CD8-positive, alpha-beta T cell (primary cell): ENCODE measurements at regions of chr5 and their contacts with region 1.

Region 1: GRCh38 chr5:90434116-90434714 is 24.7 kb upstream of the CETN3 start:
- DNase-seq: peak in 7 of 9 experiments; percentile 16 to 60 (median 52)
- ATAC-seq: peak; percentile 69
- H3K4me3 ChIP-seq: no peak overlapping the region
- H3K4me3 Mint-ChIP-seq: no peak overlapping the region
- H3K27ac ChIP-seq: no peak overlapping the region
- H3K27ac Mint-ChIP-seq: no peak overlapping the region
- H3K4me1 ChIP-seq: no peaks in the 10 kb centered on the region
- H3K4me1 Mint-ChIP-seq: no peaks in the 10 kb centered on the region
- H3K27me3 ChIP-seq: no peaks in the 10 kb centered on the region
- H3K27me3 Mint-ChIP-seq: peaks cover 8% of the 10 kb centered on the region
- CTCF ChIP-seq: peak; percentile 68

Region 2: DNA sequence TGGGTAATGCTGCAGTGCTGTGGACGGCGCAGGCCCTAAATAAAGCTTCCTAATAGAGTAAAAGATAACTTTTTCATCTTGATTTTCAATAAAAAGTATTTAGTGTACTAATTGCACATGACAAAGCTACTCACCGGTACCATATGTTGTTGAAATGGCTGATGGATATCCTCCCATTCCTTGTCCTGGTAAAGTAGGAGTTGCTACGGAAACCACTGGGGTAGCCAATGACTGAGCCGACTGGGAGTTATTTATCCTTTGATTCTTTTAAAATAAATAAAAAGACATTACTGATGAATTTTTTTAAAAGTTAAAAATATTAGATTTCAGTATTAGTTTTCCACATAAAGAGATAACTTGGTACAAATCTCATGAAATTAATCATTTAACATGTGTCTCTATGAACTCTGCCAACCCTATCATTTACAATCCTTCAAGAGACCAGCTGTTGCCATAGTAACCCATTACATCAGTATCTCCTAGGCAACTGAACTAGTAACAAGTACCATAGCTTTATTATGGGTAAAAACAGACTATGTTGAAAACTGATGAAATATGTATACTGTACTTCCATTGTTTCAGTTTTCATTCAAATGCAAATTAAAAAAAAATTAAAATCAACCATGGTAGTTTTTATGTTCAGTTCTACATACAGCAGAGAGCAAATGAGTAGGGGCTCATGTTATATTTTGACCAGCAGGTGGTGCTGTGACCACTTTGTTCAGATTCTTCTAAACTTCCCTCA is 1705.0 kb before region 1 on chr5:
- CTCF ChIA-PET with region 1: interaction called, 21 read pairs
- POLR2A ChIA-PET with region 1: no interaction called
- intact Hi-C with region 1: loop called (anchors 1 kb)
- DNase-seq: peak in 8 of 9 experiments; percentile 30 to 76 (median 58)
- ATAC-seq: peak; percentile 68
- H3K4me3 ChIP-seq: no peak overlapping the region
- H3K4me3 Mint-ChIP-seq: no peak overlapping the region
- H3K27ac ChIP-seq: no peak overlapping the region
- H3K27ac Mint-ChIP-seq: no peak overlapping the region
- H3K4me1 ChIP-seq: no peaks in the 10 kb centered on the region
- H3K4me1 Mint-ChIP-seq: peaks cover 5% of the 10 kb centered on the region
- H3K27me3 ChIP-seq: no peaks in the 10 kb centered on the region
- H3K27me3 Mint-ChIP-seq: peaks cover 15% of the 10 kb centered on the region
- CTCF ChIP-seq: peak; percentile 86

Region 3: DNA sequence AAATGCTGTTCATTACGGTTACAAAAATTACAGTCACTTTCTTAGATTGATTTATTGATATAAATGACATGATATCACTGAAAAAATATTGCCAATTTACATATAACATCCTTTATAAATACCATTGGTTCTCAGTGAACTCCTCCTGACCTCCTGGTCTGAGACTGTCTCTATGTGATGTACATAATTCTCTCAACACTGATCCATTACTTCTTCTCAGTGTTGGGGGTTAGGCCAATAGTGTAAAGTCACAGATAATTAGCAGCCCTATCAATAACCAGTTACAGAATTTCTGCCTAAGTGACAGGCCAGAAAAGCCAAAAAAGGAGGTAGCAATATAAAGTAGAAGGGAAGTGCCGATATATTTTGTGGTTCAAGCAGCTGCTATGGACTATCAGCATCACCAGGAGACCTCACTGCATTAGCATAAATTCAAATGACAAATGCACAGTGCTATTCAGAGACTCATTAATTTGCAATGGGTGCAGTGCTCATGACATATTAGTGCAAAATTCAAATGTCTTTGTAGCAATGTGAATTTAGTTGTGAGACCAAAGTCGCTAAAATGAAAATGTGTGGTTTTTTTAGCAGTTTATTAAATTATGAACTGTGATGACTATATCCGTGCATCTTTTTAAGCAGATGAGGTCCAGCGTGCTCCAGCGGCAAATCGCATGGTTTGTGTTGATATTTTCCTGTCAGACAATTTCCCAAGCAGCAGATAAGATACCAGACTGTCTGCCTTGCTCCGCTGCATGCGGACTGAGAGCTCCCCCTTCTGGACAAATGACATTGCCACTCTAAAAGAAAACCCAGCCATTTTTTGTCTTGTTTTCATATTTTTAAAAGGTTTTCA is 169.3 kb before region 1 on chr5:
- CTCF ChIA-PET with region 1: no interaction called
- POLR2A ChIA-PET with region 1: no interaction called
- intact Hi-C with region 1: loop called (anchors 5 kb)
- DNase-seq: peak; percentile 2 to 59 (median 41)
- ATAC-seq: no peak
- H3K4me3 ChIP-seq: no peak overlapping the region
- H3K4me3 Mint-ChIP-seq: no peak overlapping the region
- H3K27ac ChIP-seq: no peak overlapping the region
- H3K27ac Mint-ChIP-seq: no peak overlapping the region
- H3K4me1 ChIP-seq: no peaks in the 10 kb centered on the region
- H3K4me1 Mint-ChIP-seq: peaks cover 2% of the 10 kb centered on the region
- H3K27me3 ChIP-seq: no peaks in the 10 kb centered on the region
- H3K27me3 Mint-ChIP-seq: peaks cover 11% of the 10 kb centered on the region
- CTCF ChIP-seq: peak; percentile 74

Region 4: DNA sequence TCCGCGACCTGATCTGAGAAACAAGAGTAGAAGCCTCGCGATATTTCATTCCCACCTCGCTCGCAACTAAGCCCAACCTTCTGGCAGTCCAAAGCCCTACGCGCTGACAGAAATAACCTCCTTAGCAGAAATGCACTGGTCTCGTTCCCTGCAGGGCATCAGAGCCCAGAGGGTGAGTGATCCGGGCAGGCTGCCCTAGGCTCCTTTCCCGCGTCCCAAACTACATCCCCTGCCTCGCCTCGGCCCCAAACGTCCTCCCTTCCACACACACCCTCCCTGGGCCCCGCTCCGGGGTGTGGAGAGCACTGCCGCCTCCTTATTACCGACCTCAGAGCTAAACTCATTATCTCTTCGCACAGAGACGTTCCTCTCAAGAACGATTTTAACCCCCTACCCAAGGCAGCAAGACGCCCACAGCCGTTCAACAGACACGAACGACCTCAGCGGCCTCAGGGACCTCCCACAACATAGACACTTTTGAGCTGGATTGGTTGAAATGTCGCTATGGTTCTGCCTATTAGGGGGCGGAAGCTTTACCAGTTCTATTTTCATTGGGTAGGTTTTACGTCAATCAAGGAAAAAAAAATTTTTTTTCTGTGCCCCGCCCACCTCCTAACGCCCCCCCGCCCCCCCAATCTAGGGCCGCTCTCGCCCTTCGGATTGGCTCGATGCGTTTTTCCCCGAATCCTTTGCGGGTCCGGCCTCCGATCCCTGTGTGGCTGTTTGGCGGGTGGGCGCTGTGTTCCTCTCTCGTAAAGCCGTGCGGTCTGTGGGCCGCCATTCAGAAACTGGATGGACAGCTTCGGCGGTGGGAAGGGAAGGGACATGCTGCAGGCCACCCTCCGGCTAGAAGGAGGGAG is 24.7 kb before region 1 on chr5 and contains the start of gene CETN3:
- CTCF ChIA-PET with region 1: interaction called, 3 read pairs
- POLR2A ChIA-PET with region 1: interaction called, 10 read pairs
- intact Hi-C with region 1: loop called in 1 of 2 experiments (anchors 2 kb)
- DNase-seq: peak; percentile 81 to 96 (median 89)
- ATAC-seq: peak; percentile 90
- H3K4me3 ChIP-seq: peak within 1 kb of the TSS; percentile 91 to 99
- H3K4me3 Mint-ChIP-seq: no peak within 1 kb of the TSS
- H3K27ac ChIP-seq: peak within 1 kb of the TSS; percentile 93 to 95
- H3K27ac Mint-ChIP-seq: no peak within 1 kb of the TSS
- H3K4me1 ChIP-seq: peaks cover 7% of the 10 kb centered on the region
- H3K4me1 Mint-ChIP-seq: peaks cover 24% of the 10 kb centered on the region
- H3K27me3 ChIP-seq: no peaks in the 10 kb centered on the region
- H3K27me3 Mint-ChIP-seq: no peaks in the 10 kb centered on the region
- CTCF ChIP-seq: no peak
- total RNA-seq, gene CETN3: 2.4 to 3.4 TPM

Region 5: DNA sequence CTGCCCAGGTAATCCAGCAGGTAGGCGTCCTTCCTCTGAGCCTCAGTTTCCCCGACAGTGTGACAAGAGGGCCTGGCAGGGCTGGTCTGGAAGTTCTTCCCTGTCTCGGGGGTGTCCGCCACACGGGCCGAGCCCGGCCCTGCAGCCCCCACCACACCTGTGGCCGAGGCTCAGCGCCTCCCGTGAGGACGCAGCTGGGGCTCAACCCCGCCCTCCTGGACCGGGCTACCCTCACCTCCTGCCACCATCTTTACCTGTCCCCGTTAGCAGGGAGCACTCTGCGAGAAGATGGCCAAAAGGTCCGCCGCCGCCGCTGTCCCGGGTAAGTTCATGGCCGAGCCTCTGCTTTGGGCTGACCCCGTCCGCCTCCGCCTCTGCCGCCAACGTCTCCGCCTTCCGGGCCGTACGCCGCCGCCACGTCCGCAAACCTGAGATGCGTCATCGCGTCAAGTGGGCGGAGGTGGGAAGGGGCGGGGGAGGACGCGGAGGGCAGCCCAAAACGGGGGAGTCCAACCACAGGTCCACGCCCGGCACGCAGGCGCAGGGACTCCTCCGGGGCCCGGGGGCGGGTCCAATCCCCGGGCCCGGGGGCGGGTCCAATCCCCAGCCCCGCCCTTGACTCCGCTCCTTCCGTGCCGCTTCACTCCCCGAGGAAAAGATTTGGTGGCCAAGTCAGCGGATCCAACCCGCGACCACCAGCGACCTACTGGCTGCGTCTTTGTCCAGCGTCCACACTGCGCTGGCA is 95.2 kb after region 1 on chr5 and contains the start of gene LYSMD3:
- CTCF ChIA-PET with region 1: interaction called, 59 read pairs
- POLR2A ChIA-PET with region 1: interaction called, 7 read pairs
- intact Hi-C with region 1: loop called in 1 of 2 experiments (anchors 1 kb)
- DNase-seq: peak; percentile 94 to 99 (median 98)
- ATAC-seq: peak; percentile 91
- H3K4me3 ChIP-seq: peak within 1 kb of the TSS; percentile 90 to 98
- H3K4me3 Mint-ChIP-seq: peak within 1 kb of the TSS; percentile 99
- H3K27ac ChIP-seq: peak within 1 kb of the TSS; percentile 95 to 98
- H3K27ac Mint-ChIP-seq: peak within 1 kb of the TSS; percentile 99
- H3K4me1 ChIP-seq: peaks cover 27% of the 10 kb centered on the region
- H3K4me1 Mint-ChIP-seq: peaks cover 37% of the 10 kb centered on the region
- H3K27me3 ChIP-seq: no peaks in the 10 kb centered on the region
- H3K27me3 Mint-ChIP-seq: peaks cover 11% of the 10 kb centered on the region
- CTCF ChIP-seq: no peak
- total RNA-seq, gene LYSMD3: 25.8 to 30.9 TPM

Region 6: GRCh38 chr5:90602681-90603080 is 168.5 kb after region 1 on chr5:
- CTCF ChIA-PET with region 1: interaction called, 3 read pairs
- POLR2A ChIA-PET with region 1: no interaction called
- intact Hi-C with region 1: loop called in 1 of 2 experiments (anchors 5 kb)
- DNase-seq: no peak
- ATAC-seq: no peak
- H3K4me3 ChIP-seq: no peak overlapping the region
- H3K4me3 Mint-ChIP-seq: no peak overlapping the region
- H3K27ac ChIP-seq: no peak overlapping the region
- H3K27ac Mint-ChIP-seq: no peak overlapping the region
- H3K4me1 ChIP-seq: no peaks in the 10 kb centered on the region
- H3K4me1 Mint-ChIP-seq: no peaks in the 10 kb centered on the region
- H3K27me3 ChIP-seq: no peaks in the 10 kb centered on the region
- H3K27me3 Mint-ChIP-seq: peaks cover 24% of the 10 kb centered on the region
- CTCF ChIP-seq: no peak

Region 7: DNA sequence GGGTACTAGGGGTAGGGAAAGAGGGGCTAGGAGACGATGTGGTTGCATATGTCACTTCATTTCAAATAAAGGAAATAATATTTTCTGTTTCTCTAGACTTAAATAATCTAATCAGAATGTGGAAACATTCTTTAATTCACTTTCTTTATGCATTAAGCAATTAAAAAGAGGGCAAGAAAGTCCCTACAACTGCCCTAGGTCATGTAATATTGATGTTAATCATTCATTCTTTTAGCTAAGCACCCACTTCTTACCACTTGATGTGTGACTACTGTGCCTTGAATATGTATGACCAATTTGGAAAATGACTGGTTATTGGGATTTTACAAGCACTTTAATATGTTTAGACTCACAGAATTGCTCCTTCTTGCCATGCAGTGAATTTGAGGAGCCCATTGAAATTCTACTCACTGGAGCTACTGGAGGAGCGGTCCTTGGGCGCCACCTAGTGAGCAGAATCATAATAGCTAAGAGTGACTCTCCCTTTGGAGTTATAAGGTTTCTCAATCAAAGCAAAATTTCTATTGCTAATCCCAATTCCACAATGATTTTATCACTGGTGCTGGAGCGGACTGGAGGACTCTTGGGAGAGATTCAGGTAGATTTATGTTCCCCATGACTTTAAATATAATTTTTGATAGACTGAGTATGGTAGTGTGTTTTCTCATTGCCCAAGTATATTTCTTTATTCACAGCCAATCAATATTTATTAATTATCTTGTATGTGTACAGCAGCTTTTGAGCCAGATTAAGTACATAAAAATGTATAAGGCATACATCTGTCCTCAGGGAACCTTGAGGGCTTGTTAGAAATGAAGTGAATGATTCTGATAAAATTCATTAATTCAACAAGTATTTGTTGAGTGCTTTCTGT is 349.5 kb after region 1 on chr5:
- CTCF ChIA-PET with region 1: interaction called, 19 read pairs
- POLR2A ChIA-PET with region 1: interaction called, 3 read pairs
- intact Hi-C with region 1: loop called in 1 of 2 experiments (anchors 1 kb)
- DNase-seq: peak; percentile 36 to 74 (median 65)
- ATAC-seq: peak; percentile 69
- H3K4me3 ChIP-seq: no peak overlapping the region
- H3K4me3 Mint-ChIP-seq: no peak overlapping the region
- H3K27ac ChIP-seq: no peak overlapping the region
- H3K27ac Mint-ChIP-seq: no peak overlapping the region
- H3K4me1 ChIP-seq: no peaks in the 10 kb centered on the region
- H3K4me1 Mint-ChIP-seq: no peaks in the 10 kb centered on the region
- H3K27me3 ChIP-seq: no peaks in the 10 kb centered on the region
- H3K27me3 Mint-ChIP-seq: no peaks in the 10 kb centered on the region
- CTCF ChIP-seq: peak; percentile 96